IMR-90 (cell line): ENCODE measurements at regions of chr9 and their contacts with region 1.

Region 1: GRCh38 chr9:111136180-111136579 is 97.9 kb upstream of the LPAR1 start:
- DNase-seq: no peak
- ATAC-seq: no peak
- H3K4me3 ChIP-seq: no peak overlapping the region
- H3K27ac ChIP-seq: no peak overlapping the region
- H3K4me1 ChIP-seq: no peaks in the 10 kb centered on the region
- H3K27me3 ChIP-seq: no peaks in the 10 kb centered on the region
- CTCF ChIP-seq: no peak
- POLR2A ChIP-seq: no peak
- RAD21 ChIP-seq: no peak

Region 2: GRCh38 chr9:110874963-110875674 is 261.1 kb before region 1 on chr9:
- CTCF ChIA-PET with region 1: no interaction called
- POLR2A ChIA-PET with region 1: interaction called, 11 read pairs
- dilution Hi-C with region 1: no loop called
- in situ Hi-C with region 1: no loop called
- intact Hi-C with region 1: no loop called
- DNase-seq: no peak
- ATAC-seq: no peak
- H3K4me3 ChIP-seq: no peak overlapping the region
- H3K27ac ChIP-seq: peak overlapping the region; percentile 5; the same call in 1 of the 2 replicates
- H3K4me1 ChIP-seq: peaks cover 10% of the 10 kb centered on the region
- H3K27me3 ChIP-seq: no peaks in the 10 kb centered on the region
- CTCF ChIP-seq: no peak
- POLR2A ChIP-seq: no peak
- RAD21 ChIP-seq: no peak

Region 3: DNA sequence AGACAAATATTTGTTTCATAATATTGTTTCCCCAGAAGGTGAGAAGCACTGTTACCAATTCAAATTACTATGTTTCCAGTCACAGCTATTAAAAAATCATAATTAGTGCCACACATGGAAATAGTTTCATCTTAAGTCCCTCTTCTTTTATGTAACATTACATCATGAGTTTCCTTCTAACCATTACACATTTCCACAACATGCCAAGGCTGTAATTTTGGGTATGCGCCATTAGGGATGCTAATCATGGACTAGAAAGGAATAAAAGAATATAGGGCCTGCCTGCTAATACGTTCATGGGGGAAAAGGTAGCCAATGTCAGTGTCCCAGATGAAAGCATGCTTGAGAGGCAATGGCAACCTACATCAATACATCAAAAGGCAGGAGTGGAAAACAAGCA is 44.6 kb after region 1 on chr9:
- CTCF ChIA-PET with region 1: no interaction called
- POLR2A ChIA-PET with region 1: no interaction called
- dilution Hi-C with region 1: no loop called
- in situ Hi-C with region 1: no loop called
- intact Hi-C with region 1: loop called (anchors 5 kb)
- DNase-seq: no peak
- ATAC-seq: no peak
- H3K4me3 ChIP-seq: no peak overlapping the region
- H3K27ac ChIP-seq: no peak overlapping the region
- H3K4me1 ChIP-seq: peaks cover 2% of the 10 kb centered on the region; the same call in 1 of the 2 replicates
- H3K27me3 ChIP-seq: no peaks in the 10 kb centered on the region
- CTCF ChIP-seq: no peak
- POLR2A ChIP-seq: no peak
- RAD21 ChIP-seq: no peak